ENCODE measurements at regions of chr11 and their contacts with region 1.

Region 1: GRCh38 chr11:77091146-77091940 is 11.3 kb upstream of the OMP start:
- DNase-seq: peak; percentile 90
- H3K4me3 ChIP-seq: no peak overlapping the region
- H3K27ac ChIP-seq: no peak overlapping the region
- H3K4me1 ChIP-seq: peaks cover 0 to 20% (median 3%) of the 10 kb centered on the region in 6 donors
- H3K27me3 ChIP-seq: no peaks in the 10 kb centered on the region
- CTCF ChIP-seq: peak; percentile 86 to 94 (median 90)
- POLR2A ChIP-seq: no peak

Region 2: GRCh38 chr11:77053217-77054015 is 37.9 kb before region 1 on chr11:
- intact Hi-C with region 1: loop called (anchors 2 kb)
- DNase-seq: no peak
- H3K4me3 ChIP-seq: no peak overlapping the region
- H3K27ac ChIP-seq: no peak overlapping the region
- H3K4me1 ChIP-seq: no peaks in the 10 kb centered on the region
- H3K27me3 ChIP-seq: no peaks in the 10 kb centered on the region
- CTCF ChIP-seq: no peak
- POLR2A ChIP-seq: no peak

Region 3: GRCh38 chr11:77236901-77237300 is 145.6 kb after region 1 on chr11:
- intact Hi-C with region 1: no loop called
- DNase-seq: no peak
- H3K4me3 ChIP-seq: no peak overlapping the region
- H3K27ac ChIP-seq: no peak overlapping the region
- H3K4me1 ChIP-seq: no peaks in the 10 kb centered on the region
- H3K27me3 ChIP-seq: no peaks in the 10 kb centered on the region
- CTCF ChIP-seq: no peak
- POLR2A ChIP-seq: no peak

Region 4: GRCh38 chr11:77695417-77695816 is 604.1 kb after region 1 on chr11:
- intact Hi-C with region 1: no loop called
- DNase-seq: no peak
- H3K4me3 ChIP-seq: no peak overlapping the region
- H3K27ac ChIP-seq: no peak overlapping the region
- H3K4me1 ChIP-seq: no peaks in the 10 kb centered on the region
- H3K27me3 ChIP-seq: no peaks in the 10 kb centered on the region
- CTCF ChIP-seq: no peak
- POLR2A ChIP-seq: no peak

Measured in spleen (tissue), 13 donors.